ENCODE measurements at regions of chr4 and their contacts with region 1.

Region 1: GRCh38 chr4:169010125-169011023 is at the start of gene CBR4:
- DNase-seq: peak; percentile 96 to 97 (median 97)
- H3K4me3 ChIP-seq: peak within 1 kb of the TSS; percentile 70
- H3K27ac ChIP-seq: peak within 1 kb of the TSS; percentile 82 to 89
- H3K4me1 ChIP-seq: peaks cover 4% of the 10 kb centered on the region
- H3K27me3 ChIP-seq: no peaks in the 10 kb centered on the region
- CTCF ChIP-seq: peak in 2 of 3 donors; percentile 26 to 34
- EP300 ChIP-seq: no peak
- POLR2A ChIP-seq: peak; percentile 65
- total RNA-seq, gene CBR4: 17.5 to 24.0 (median 20.2) TPM

Region 2: GRCh38 chr4:168183717-168184608 is 826.4 kb before region 1 on chr4:
- intact Hi-C with region 1: no loop called
- DNase-seq: no peak
- H3K4me3 ChIP-seq: no peak overlapping the region
- H3K27ac ChIP-seq: no peak overlapping the region
- H3K4me1 ChIP-seq: no peaks in the 10 kb centered on the region
- H3K27me3 ChIP-seq: no peaks in the 10 kb centered on the region
- CTCF ChIP-seq: no peak
- EP300 ChIP-seq: no peak
- POLR2A ChIP-seq: no peak

Region 3: GRCh38 chr4:169147191-169147590 is 136.8 kb after region 1 on chr4:
- intact Hi-C with region 1: no loop called
- DNase-seq: no peak
- H3K4me3 ChIP-seq: no peak overlapping the region
- H3K27ac ChIP-seq: no peak overlapping the region
- H3K4me1 ChIP-seq: no peaks in the 10 kb centered on the region
- H3K27me3 ChIP-seq: no peaks in the 10 kb centered on the region
- CTCF ChIP-seq: no peak
- EP300 ChIP-seq: no peak
- POLR2A ChIP-seq: no peak

Region 4: GRCh38 chr4:169270810-169271691 is 260.7 kb after region 1 on chr4 and contains the start of gene SH3RF1:
- intact Hi-C with region 1: loop called in 2 of 4 experiments (anchors 5 to 10 kb)
- DNase-seq: peak; percentile 91 to 93 (median 93)
- H3K4me3 ChIP-seq: peak within 1 kb of the TSS; percentile 93
- H3K27ac ChIP-seq: peak within 1 kb of the TSS; percentile 72 to 95
- H3K4me1 ChIP-seq: peaks cover 14% of the 10 kb centered on the region
- H3K27me3 ChIP-seq: no peaks in the 10 kb centered on the region
- CTCF ChIP-seq: peak in 1 of 3 donors; percentile 47
- EP300 ChIP-seq: no peak
- POLR2A ChIP-seq: peak; percentile 92
- total RNA-seq, gene SH3RF1: 18.7 to 32.6 (median 22.4) TPM

Region 5: DNA sequence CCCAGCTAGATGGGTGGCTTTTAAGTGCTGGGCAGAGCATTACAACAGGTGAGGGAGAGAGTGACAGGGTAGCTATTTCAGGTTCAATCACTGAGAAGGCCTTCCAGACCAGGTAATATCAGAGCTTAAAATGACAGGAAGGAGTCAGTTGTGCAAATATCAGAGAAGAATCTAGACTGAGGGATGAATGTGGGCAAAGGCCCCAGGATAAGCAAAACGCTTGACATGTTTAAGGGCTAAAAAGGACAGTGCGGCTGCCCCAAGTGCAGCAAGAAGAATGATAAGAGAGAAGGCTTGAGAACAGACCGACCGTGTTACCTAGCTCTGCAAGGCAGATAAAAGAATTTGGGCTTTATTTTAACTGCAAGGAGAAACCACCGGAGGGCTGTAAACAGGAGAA is 1060.8 kb after region 1 on chr4:
- intact Hi-C with region 1: no loop called
- DNase-seq: no peak
- H3K4me3 ChIP-seq: no peak overlapping the region
- H3K27ac ChIP-seq: no peak overlapping the region
- H3K4me1 ChIP-seq: no peaks in the 10 kb centered on the region
- H3K27me3 ChIP-seq: no peaks in the 10 kb centered on the region
- CTCF ChIP-seq: no peak
- EP300 ChIP-seq: no peak
- POLR2A ChIP-seq: no peak

Measured in ovary (tissue), 10 donors.